ENCODE measurements at regions of chr2 and their contacts with region 1.

Region 1: DNA sequence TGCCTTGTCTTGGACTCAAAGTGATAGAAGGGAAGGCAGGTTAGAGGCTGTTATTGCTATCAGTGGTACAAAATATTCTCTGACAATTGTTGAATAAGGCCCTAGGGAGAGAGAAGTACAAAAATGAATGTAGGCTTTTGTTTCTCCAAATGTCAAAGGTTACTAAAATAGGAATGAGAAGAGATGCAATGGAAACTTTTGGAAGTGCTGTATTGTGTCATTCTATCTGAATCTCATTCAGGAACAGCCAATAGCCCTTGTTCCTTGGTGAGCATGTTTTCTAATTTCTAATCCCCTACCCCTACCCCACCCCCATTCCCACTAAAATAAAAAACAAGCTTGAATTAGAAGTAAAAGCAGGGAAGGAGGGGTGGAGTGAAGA is 166.4 kb downstream of the GPD2 start:
- DNase-seq: no peak
- H3K4me3 ChIP-seq: no peak overlapping the region
- H3K27ac ChIP-seq: no peak overlapping the region
- H3K4me1 ChIP-seq: no peaks in the 10 kb centered on the region
- CTCF ChIP-seq: no peak

Region 2: GRCh38 chr2:156625360-156626170 is 23.0 kb after region 1 on chr2:
- CTCF ChIA-PET with region 1: interaction called, 12 read pairs
- POLR2A ChIA-PET with region 1: no interaction called
- intact Hi-C with region 1: no loop called
- DNase-seq: no peak
- H3K4me3 ChIP-seq: no peak overlapping the region
- H3K27ac ChIP-seq: no peak overlapping the region
- H3K4me1 ChIP-seq: no peaks in the 10 kb centered on the region
- CTCF ChIP-seq: no peak